A673 (cell line): ENCODE measurements at regions of chr3 and their contacts with region 1.

Region 1: GRCh38 chr3:99753268-99753975 is 64.2 kb upstream of the CMSS1 start:
- DNase-seq: peak; percentile 82
- H3K4me3 ChIP-seq: no peak overlapping the region
- H3K27ac ChIP-seq: no peak overlapping the region
- H3K4me1 ChIP-seq: no peaks in the 10 kb centered on the region
- H3K27me3 ChIP-seq: no peaks in the 10 kb centered on the region
- CTCF ChIP-seq: peak; percentile 81

Region 2: DNA sequence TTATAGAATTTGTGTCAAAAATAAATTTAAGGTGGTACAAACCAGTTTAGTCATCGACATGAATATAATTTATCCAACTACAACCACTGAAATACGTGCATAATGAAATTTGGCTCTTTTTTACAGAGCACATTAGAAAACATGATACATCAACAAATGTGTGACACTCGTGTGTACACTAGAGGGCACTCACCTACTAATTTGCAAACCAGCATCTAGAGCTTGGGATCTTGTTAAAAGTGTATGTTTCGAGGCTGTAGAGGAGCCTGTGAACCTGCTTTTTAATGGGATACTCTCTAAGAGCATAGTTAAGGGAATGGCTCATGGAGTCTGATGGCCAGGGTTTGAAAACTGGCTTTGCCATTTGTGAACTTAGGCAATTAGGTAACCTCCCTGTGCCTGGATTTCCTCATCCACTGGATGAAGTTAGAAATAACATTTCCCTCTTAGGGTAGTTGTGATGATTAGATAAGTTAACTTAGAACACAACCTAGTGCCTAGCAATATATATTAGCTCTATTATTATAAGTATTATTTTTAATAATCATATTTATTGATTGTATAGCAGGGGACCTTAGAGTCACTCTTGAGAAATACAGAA is 1151.2 kb before region 1 on chr3:
- CTCF ChIA-PET with region 1: interaction called, 3 read pairs
- POLR2A ChIA-PET with region 1: no interaction called
- intact Hi-C with region 1: loop called (anchors 10 kb)
- DNase-seq: peak; percentile 77
- H3K4me3 ChIP-seq: no peak overlapping the region
- H3K27ac ChIP-seq: no peak overlapping the region
- H3K4me1 ChIP-seq: no peaks in the 10 kb centered on the region
- H3K27me3 ChIP-seq: no peaks in the 10 kb centered on the region
- CTCF ChIP-seq: peak; percentile 81

Region 3: GRCh38 chr3:98817547-98818041 is 935.8 kb before region 1 on chr3:
- CTCF ChIA-PET with region 1: interaction called, 9 read pairs
- POLR2A ChIA-PET with region 1: no interaction called
- intact Hi-C with region 1: loop called (anchors 2 kb)
- DNase-seq: peak; percentile 68
- H3K4me3 ChIP-seq: no peak overlapping the region
- H3K27ac ChIP-seq: no peak overlapping the region
- H3K4me1 ChIP-seq: peaks cover 4% of the 10 kb centered on the region
- H3K27me3 ChIP-seq: no peaks in the 10 kb centered on the region
- CTCF ChIP-seq: peak; percentile 78

Region 4: GRCh38 chr3:98994128-98994762 is 759.2 kb before region 1 on chr3:
- CTCF ChIA-PET with region 1: interaction called, 3 read pairs
- POLR2A ChIA-PET with region 1: no interaction called
- intact Hi-C with region 1: loop called (anchors 5 kb)
- DNase-seq: peak; percentile 71
- H3K4me3 ChIP-seq: no peak overlapping the region
- H3K27ac ChIP-seq: no peak overlapping the region
- H3K4me1 ChIP-seq: no peaks in the 10 kb centered on the region
- H3K27me3 ChIP-seq: no peaks in the 10 kb centered on the region
- CTCF ChIP-seq: peak; percentile 76

Region 5: DNA sequence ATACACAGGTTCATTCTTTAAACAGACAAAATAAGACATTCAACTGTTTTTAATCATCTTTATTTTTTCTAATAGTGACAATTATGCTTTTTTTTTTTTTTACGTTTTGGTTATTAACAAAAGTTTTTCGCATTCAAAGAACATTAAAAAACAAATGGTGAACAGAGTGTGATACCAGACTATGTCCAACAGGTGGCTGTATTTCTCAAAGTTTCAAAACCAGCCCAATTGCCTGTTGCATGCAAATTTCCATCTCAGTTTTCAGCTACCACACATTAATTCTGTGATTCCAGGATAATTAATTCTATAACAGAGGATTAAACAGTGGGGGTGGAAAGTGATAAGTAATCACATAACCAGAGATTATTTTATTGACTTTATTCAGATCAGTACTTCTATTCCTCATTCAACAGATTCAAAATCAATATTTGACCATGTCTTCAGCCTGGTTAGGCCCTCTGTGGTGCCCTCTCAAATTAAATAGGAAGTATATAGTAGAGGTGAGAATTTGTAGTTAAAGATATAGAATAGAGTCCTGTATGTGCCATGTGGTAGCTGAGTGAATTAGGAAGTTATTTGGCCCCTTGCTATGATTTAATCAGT is 729.7 kb before region 1 on chr3:
- CTCF ChIA-PET with region 1: interaction called, 10 read pairs
- POLR2A ChIA-PET with region 1: no interaction called
- intact Hi-C with region 1: loop called (anchors 2 kb)
- DNase-seq: peak; percentile 74
- H3K4me3 ChIP-seq: no peak overlapping the region
- H3K27ac ChIP-seq: no peak overlapping the region
- H3K4me1 ChIP-seq: no peaks in the 10 kb centered on the region
- H3K27me3 ChIP-seq: no peaks in the 10 kb centered on the region
- CTCF ChIP-seq: peak; percentile 80

Region 6: GRCh38 chr3:99114565-99115291 is 638.7 kb before region 1 on chr3:
- CTCF ChIA-PET with region 1: no interaction called
- POLR2A ChIA-PET with region 1: no interaction called
- intact Hi-C with region 1: loop called (anchors 2 kb)
- DNase-seq: peak; percentile 60
- H3K4me3 ChIP-seq: no peak overlapping the region
- H3K27ac ChIP-seq: no peak overlapping the region
- H3K4me1 ChIP-seq: no peaks in the 10 kb centered on the region
- H3K27me3 ChIP-seq: no peaks in the 10 kb centered on the region
- CTCF ChIP-seq: peak; percentile 63

Region 7: GRCh38 chr3:99186016-99186415 is 567.4 kb before region 1 on chr3:
- CTCF ChIA-PET with region 1: no interaction called
- POLR2A ChIA-PET with region 1: no interaction called
- intact Hi-C with region 1: loop called (anchors 2 kb)
- DNase-seq: no peak
- H3K4me3 ChIP-seq: no peak overlapping the region
- H3K27ac ChIP-seq: no peak overlapping the region
- H3K4me1 ChIP-seq: no peaks in the 10 kb centered on the region
- H3K27me3 ChIP-seq: no peaks in the 10 kb centered on the region
- CTCF ChIP-seq: no peak